GM23248 (cell line): ENCODE measurements at regions of chr11 and their contacts with region 1.

Region 1: GRCh38 chr11:35617687-35618496 is at the start of gene FJX1:
- DNase-seq: peak; percentile 95
- H3K4me3 ChIP-seq: peak within 1 kb of the TSS; percentile 72
- H3K27ac ChIP-seq: peak within 1 kb of the TSS; percentile 79
- H3K4me1 ChIP-seq: peaks cover 48% of the 10 kb centered on the region
- H3K27me3 ChIP-seq: no peaks in the 10 kb centered on the region
- total RNA-seq, gene FJX1: 30.9 and 37.0 TPM in 2 replicates

Region 2: GRCh38 chr11:34869426-34869825 is 748.5 kb before region 1 on chr11:
- in situ Hi-C with region 1: no loop called
- DNase-seq: no peak
- H3K4me3 ChIP-seq: no peak overlapping the region
- H3K27ac ChIP-seq: no peak overlapping the region
- H3K4me1 ChIP-seq: no peaks in the 10 kb centered on the region; the same call in 1 of the 2 replicates
- H3K27me3 ChIP-seq: no peaks in the 10 kb centered on the region

Region 3: DNA sequence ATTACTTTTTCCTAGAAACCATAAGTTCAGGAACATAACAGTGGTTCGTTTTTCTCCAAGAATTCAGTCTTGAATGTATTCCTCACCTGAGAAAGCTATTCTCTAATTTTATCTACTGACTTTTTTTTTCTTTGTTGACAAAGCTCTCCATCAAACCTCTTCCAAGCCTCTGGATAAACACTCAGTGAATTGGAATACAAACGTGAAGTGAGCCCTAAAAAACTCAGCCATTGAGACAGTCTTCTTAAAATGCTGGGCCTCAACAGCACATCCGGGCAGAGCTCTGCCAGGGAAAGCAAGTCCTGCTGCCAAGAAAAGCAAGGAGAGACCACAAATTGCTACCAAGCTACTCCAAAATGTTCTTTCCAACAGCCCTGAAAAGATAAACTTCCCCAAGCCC is 190.8 kb before region 1 on chr11:
- in situ Hi-C with region 1: no loop called
- DNase-seq: peak; percentile 78
- H3K4me3 ChIP-seq: no peak overlapping the region
- H3K27ac ChIP-seq: no peak overlapping the region
- H3K4me1 ChIP-seq: peaks cover 45% of the 10 kb centered on the region
- H3K27me3 ChIP-seq: no peaks in the 10 kb centered on the region

Region 4: GRCh38 chr11:35711173-35711910 is 93.5 kb after region 1 on chr11:
- in situ Hi-C with region 1: no loop called
- DNase-seq: peak; percentile 14
- H3K4me3 ChIP-seq: no peak overlapping the region
- H3K27ac ChIP-seq: no peak overlapping the region
- H3K4me1 ChIP-seq: no peaks in the 10 kb centered on the region
- H3K27me3 ChIP-seq: no peaks in the 10 kb centered on the region

Region 5: GRCh38 chr11:35815556-35816315 is 197.8 kb after region 1 on chr11:
- in situ Hi-C with region 1: loop called (anchors 10 kb)
- DNase-seq: peak; percentile 23
- H3K4me3 ChIP-seq: no peak overlapping the region
- H3K27ac ChIP-seq: no peak overlapping the region
- H3K4me1 ChIP-seq: no peaks in the 10 kb centered on the region
- H3K27me3 ChIP-seq: no peaks in the 10 kb centered on the region

Region 6: GRCh38 chr11:36034551-36035331 is 416.8 kb after region 1 on chr11:
- in situ Hi-C with region 1: loop called (anchors 10 kb)
- DNase-seq: peak; percentile 90
- H3K4me3 ChIP-seq: no peak overlapping the region
- H3K27ac ChIP-seq: no peak overlapping the region
- H3K4me1 ChIP-seq: peaks cover 24% of the 10 kb centered on the region
- H3K27me3 ChIP-seq: no peaks in the 10 kb centered on the region

Region 7: GRCh38 chr11:36149538-36150242 is 531.8 kb after region 1 on chr11:
- in situ Hi-C with region 1: loop called (anchors 25 kb)
- DNase-seq: peak; percentile 96
- H3K4me3 ChIP-seq: no peak overlapping the region
- H3K27ac ChIP-seq: peak overlapping the region; percentile 54
- H3K4me1 ChIP-seq: peaks cover 19% of the 10 kb centered on the region
- H3K27me3 ChIP-seq: no peaks in the 10 kb centered on the region

Region 8: GRCh38 chr11:36265793-36266628 is 648.1 kb after region 1 on chr11:
- in situ Hi-C with region 1: loop called (anchors 5 kb)
- DNase-seq: peak; percentile 61
- H3K4me3 ChIP-seq: no peak overlapping the region
- H3K27ac ChIP-seq: no peak overlapping the region
- H3K4me1 ChIP-seq: no peaks in the 10 kb centered on the region
- H3K27me3 ChIP-seq: peaks cover 19% of the 10 kb centered on the region